ENCODE measurements at regions of chr12 and their contacts with region 1.

Region 1: GRCh38 chr12:56029666-56030293 is 8.9 kb downstream of the IKZF4 start:
- DNase-seq: peak; percentile 37 to 87
- H3K4me3 ChIP-seq: no peak overlapping the region
- H3K27ac ChIP-seq: no peak overlapping the region
- H3K4me1 ChIP-seq: peaks cover 0 to 11% (median 5%) of the 10 kb centered on the region in 4 donors
- H3K27me3 ChIP-seq: no peaks in the 10 kb centered on the region
- CTCF ChIP-seq: peak in 5 of 7 experiments; percentile 43 to 75 (median 57)
- EP300 ChIP-seq: no peak
- POLR2A ChIP-seq: no peak

Region 2: GRCh38 chr12:55982319-55982936 is 47.4 kb before region 1 on chr12:
- intact Hi-C with region 1: loop called (anchors 10 kb)
- DNase-seq: no peak
- H3K4me3 ChIP-seq: no peak overlapping the region
- H3K27ac ChIP-seq: no peak overlapping the region
- H3K4me1 ChIP-seq: peaks cover 14 to 60% (median 17%) of the 10 kb centered on the region in 4 donors
- H3K27me3 ChIP-seq: no peaks in the 10 kb centered on the region
- CTCF ChIP-seq: no peak
- EP300 ChIP-seq: no peak
- POLR2A ChIP-seq: no peak

Measured in stomach (tissue), 19 donors.